GM10248 (cell line): ENCODE measurements at regions of chr16 and their contacts with region 1.

Region 1: GRCh38 chr16:30844671-30845449 is 49.0 kb downstream of the BCL7C start:
- DNase-seq: peak; percentile 90
- CTCF ChIP-seq: peak; percentile 85

Region 2: GRCh38 chr16:30429678-30430427 is 415.0 kb before region 1 on chr16 and contains the start of gene DCTPP1:
- CTCF ChIA-PET with region 1: no interaction called
- POLR2A ChIA-PET with region 1: no interaction called
- DNase-seq: peak; percentile 95
- CTCF ChIP-seq: peak; percentile 90

Region 3: GRCh38 chr16:30829130-30830071 is 15.5 kb before region 1 on chr16:
- CTCF ChIA-PET with region 1: interaction called, 26 read pairs
- POLR2A ChIA-PET with region 1: no interaction called
- DNase-seq: no peak
- CTCF ChIP-seq: no peak

Region 4: DNA sequence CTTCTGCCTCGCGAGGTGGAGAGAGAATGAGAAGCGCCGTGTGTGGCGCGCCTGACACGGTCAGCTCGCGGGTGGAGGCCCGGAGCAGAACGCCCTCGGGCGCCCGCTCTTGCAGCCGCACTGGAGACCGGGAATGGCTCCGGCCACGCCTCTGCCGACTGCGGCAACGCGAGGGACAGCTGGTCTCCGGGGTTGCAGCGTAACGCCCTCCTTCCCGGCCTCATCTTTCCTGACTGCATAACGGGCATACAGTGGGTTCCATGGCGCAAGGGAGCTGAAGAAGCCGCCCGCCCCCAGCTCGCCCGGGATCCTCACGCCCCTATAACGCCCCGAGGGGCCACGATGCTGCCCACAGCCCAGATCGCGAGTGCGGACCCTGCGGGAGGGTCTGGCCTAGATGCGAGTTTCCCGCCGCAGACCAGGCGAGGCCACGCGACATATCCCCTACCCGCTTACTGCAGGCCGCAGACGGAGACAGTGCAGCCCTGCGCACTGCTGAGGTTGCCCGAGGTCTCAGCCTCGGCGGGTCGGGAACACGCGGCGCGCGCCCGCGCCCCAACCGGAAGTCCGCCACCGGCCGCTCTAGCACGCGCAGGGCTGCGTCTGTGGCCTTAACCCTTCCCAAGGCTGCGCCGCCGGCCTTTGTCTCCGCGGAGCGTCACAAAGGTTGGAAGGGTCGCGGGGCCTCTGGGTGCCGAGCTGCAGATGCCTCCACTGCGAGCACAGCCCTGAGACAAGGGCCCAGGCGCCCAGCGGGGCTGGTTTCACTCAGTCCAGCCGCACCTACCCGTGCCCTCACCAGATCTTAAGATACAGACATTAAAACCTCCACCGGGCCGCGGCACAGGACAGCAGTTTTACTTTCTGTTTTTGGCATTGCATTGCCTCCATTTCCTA is 30.2 kb after region 1 on chr16:
- CTCF ChIA-PET with region 1: interaction called, 18 read pairs
- POLR2A ChIA-PET with region 1: interaction called, 4 read pairs
- DNase-seq: peak; percentile 89
- CTCF ChIP-seq: peak; percentile 8

Region 5: DNA sequence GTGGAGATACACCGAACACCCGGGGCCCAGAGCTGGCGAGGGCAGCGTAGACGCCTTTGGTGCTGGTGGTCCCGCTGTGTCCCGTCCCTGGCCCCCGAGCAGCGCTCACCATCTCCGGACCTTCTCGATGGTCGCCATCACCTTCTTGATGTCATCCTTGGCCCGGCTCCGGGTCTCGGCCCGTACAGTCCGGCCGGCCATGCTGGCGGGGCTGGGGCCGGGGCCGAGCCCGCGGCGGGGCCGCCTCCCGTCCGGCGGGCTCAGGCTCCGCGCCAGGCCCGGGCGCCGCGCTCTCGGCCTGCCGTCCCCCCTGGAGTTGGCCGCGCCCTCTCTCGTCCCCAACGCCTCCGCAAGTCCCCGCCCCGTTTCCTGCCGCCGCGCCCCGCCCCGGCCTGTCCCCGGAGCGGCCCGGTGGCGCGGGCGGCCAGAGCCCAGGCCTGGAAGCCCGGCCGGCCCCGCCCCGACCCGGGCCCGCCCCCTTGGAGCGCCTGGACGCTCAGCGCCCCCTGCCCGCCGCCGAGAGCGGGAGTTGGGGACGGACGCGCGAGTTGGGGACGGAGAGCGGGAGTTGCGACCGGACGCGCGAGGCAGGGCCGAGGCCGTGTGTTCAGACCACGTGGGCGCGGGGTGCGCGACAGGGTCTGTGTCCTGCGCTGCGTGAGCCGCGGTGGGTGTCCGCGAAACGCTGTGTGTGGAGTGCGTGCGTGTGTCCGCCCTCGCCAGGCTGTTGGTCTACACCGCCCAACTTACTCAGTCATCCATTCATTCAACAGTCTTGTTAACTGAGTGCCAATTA is 49.1 kb after region 1 on chr16 and contains the start of gene BCL7C:
- CTCF ChIA-PET with region 1: interaction called, 73 read pairs
- POLR2A ChIA-PET with region 1: no interaction called
- DNase-seq: peak; percentile 93
- CTCF ChIP-seq: peak; percentile 69

Region 6: DNA sequence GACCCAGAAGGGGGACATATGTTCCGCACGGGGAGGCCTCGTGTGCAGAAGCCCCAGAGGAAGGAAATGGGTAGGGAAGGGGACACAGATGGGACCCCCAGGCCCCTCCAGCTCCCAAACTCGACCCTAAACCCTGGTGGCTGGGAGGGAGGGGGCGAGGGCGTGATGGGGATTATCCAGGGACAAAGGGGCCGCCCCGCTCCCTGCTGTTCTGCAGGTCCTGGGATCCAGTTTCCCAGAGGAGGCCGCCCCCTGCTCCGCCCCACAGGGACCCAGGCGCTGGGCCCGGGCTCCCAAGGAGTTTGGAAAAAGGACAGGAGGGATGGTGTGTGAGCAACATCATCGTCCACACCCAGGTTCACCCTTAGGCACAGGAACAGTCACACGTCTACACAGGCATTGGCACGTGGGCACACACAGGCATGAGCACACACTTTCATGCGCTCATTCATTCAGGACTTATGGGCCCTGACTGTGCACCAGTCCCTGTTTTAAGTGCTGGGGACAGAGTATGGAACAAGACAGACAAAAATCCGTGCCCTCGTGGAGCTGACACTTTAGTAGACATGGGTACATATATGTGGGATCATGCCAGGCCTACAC is 65.7 kb after region 1 on chr16:
- CTCF ChIA-PET with region 1: interaction called, 17 read pairs
- POLR2A ChIA-PET with region 1: no interaction called
- DNase-seq: no peak
- CTCF ChIP-seq: no peak

Region 7: GRCh38 chr16:30941600-30942425 is 97.0 kb after region 1 on chr16:
- CTCF ChIA-PET with region 1: interaction called, 56 read pairs
- POLR2A ChIA-PET with region 1: interaction called, 3 read pairs
- DNase-seq: peak; percentile 93
- CTCF ChIP-seq: peak; percentile 95

Region 8: DNA sequence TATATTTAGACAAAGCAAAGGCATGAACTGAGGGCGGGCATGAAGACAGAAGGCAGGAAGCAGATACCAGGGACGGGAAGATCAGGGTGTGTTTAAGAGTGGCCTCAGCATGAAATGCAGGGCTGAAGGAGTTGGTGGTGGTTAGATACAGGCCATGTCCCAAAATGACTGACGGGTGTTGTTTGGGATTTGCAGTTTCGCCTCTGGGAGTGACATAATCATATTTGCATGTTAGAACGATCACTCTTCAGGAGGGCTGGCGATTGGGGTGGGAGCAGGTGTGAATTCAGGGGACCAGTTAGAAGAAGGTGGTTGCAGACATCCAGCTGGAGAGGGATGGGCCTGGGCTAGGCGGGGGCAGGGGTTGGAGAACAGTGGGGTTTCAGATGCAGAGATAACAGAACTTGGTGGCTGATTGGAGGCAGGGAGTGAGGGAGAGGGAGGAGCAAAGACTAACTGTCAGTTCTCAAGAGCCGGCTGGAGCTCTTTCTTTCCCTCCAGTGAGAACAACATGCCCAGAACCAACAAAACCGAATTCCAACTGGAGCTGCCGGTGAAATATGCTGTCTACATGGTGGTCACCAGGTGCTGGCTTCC is 482.9 kb after region 1 on chr16:
- CTCF ChIA-PET with region 1: no interaction called
- POLR2A ChIA-PET with region 1: no interaction called
- DNase-seq: peak; percentile 15
- CTCF ChIP-seq: no peak